Tibial artery (tissue), 4 donors: ENCODE measurements at regions of chr15 and their contacts with region 1.

Region 1: GRCh38 chr15:66459818-66460615 is 37.5 kb downstream of the SNAPC5 start:
- DNase-seq: no peak
- H3K4me3 ChIP-seq: no peak overlapping the region
- H3K27ac ChIP-seq: no peak overlapping the region
- H3K4me1 ChIP-seq: no peaks in the 10 kb centered on the region
- H3K27me3 ChIP-seq: no peaks in the 10 kb centered on the region
- CTCF ChIP-seq: no peak

Region 2: GRCh38 chr15:66401130-66402021 is 58.6 kb before region 1 on chr15:
- intact Hi-C with region 1: loop called (anchors 2 kb)
- DNase-seq: no peak
- H3K4me3 ChIP-seq: no peak overlapping the region
- H3K27ac ChIP-seq: no peak overlapping the region
- H3K4me1 ChIP-seq: peaks cover 0 to 36% (median 22%) of the 10 kb centered on the region in 4 donors
- H3K27me3 ChIP-seq: no peaks in the 10 kb centered on the region
- CTCF ChIP-seq: no peak

Region 3: GRCh38 chr15:66489179-66489791 is 29.3 kb after region 1 on chr15:
- intact Hi-C with region 1: no loop called
- DNase-seq: no peak
- H3K4me3 ChIP-seq: no peak overlapping the region
- H3K27ac ChIP-seq: no peak overlapping the region
- H3K4me1 ChIP-seq: peaks cover 0 to 21% (median 0%) of the 10 kb centered on the region in 4 donors
- H3K27me3 ChIP-seq: no peaks in the 10 kb centered on the region
- CTCF ChIP-seq: no peak

Region 4: DNA sequence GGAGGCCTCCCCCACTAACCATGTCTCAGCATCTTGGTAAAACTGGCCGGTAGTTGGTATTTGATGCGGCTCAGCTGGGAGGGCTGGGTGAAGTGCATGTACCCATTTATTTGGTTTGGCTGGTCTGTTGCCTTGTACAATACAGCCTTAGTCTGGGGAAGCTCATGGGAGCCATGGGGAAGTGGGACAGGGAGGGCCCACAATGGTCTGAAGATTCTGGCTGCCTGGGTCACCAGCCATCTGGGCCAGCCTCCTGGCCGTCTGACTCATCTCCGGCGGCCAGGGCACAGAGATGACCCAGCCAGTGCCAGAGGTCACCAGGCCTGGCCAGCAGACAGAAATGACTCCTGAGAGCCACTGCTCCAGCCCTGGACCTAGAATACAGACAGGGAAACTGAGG is 190.4 kb after region 1 on chr15:
- intact Hi-C with region 1: no loop called
- DNase-seq: peak; percentile 75 to 79
- H3K4me3 ChIP-seq: no peak overlapping the region
- H3K27ac ChIP-seq: no peak overlapping the region
- H3K4me1 ChIP-seq: peaks cover 0 to 43% (median 32%) of the 10 kb centered on the region in 4 donors
- H3K27me3 ChIP-seq: no peaks in the 10 kb centered on the region
- CTCF ChIP-seq: no peak

Region 5: GRCh38 chr15:66851226-66852071 is 391.4 kb after region 1 on chr15:
- intact Hi-C with region 1: no loop called
- DNase-seq: peak; percentile 88 to 93
- H3K4me3 ChIP-seq: no peak overlapping the region
- H3K27ac ChIP-seq: peak overlapping the region; percentile 80 to 83
- H3K4me1 ChIP-seq: peaks cover 0 to 41% (median 32%) of the 10 kb centered on the region in 4 donors
- H3K27me3 ChIP-seq: no peaks in the 10 kb centered on the region
- CTCF ChIP-seq: peak; percentile 98 to 99